Caco-2 (cell line): ENCODE measurements at regions of chr15 and their contacts with region 1.

Region 1: GRCh38 chr15:77543159-77543882 is 89.4 kb downstream of the LINGO1 start:
- DNase-seq: peak; percentile 82 to 89
- H3K4me3 ChIP-seq: peak overlapping the region; percentile 48
- H3K4me3 Mint-ChIP-seq: peak overlapping the region; percentile 67
- H3K27ac Mint-ChIP-seq: peak overlapping the region; percentile 50
- H3K4me1 ChIP-seq: peaks cover 13% of the 10 kb centered on the region; the same call in 1 of the 2 replicates
- H3K4me1 Mint-ChIP-seq: peaks cover 14% of the 10 kb centered on the region
- H3K27me3 ChIP-seq: no peaks in the 10 kb centered on the region
- H3K27me3 Mint-ChIP-seq: no peaks in the 10 kb centered on the region
- CTCF ChIP-seq: peak; percentile 92 to 93

Region 2: GRCh38 chr15:77118882-77119321 is 424.4 kb before region 1 on chr15:
- CTCF ChIA-PET with region 1: interaction called, 27 read pairs
- POLR2A ChIA-PET with region 1: no interaction called
- intact Hi-C with region 1: loop called (anchors 2 kb)
- DNase-seq: peak in 1 of 2 experiments; percentile 51
- H3K4me3 ChIP-seq: no peak overlapping the region
- H3K4me3 Mint-ChIP-seq: no peak overlapping the region
- H3K27ac Mint-ChIP-seq: no peak overlapping the region
- H3K4me1 ChIP-seq: no peaks in the 10 kb centered on the region
- H3K4me1 Mint-ChIP-seq: no peaks in the 10 kb centered on the region
- H3K27me3 ChIP-seq: no peaks in the 10 kb centered on the region
- H3K27me3 Mint-ChIP-seq: no peaks in the 10 kb centered on the region
- CTCF ChIP-seq: peak; percentile 53 to 78

Region 3: GRCh38 chr15:77419836-77420609 is 123.3 kb before region 1 on chr15 and contains the start of gene PEAK1:
- CTCF ChIA-PET with region 1: interaction called, 19 read pairs
- POLR2A ChIA-PET with region 1: no interaction called
- intact Hi-C with region 1: no loop called
- DNase-seq: peak; percentile 99
- H3K4me3 ChIP-seq: peak within 1 kb of the TSS; percentile 93
- H3K4me3 Mint-ChIP-seq: peak within 1 kb of the TSS; percentile 94
- H3K27ac Mint-ChIP-seq: peak within 1 kb of the TSS; percentile 97
- H3K4me1 ChIP-seq: peaks cover 17% of the 10 kb centered on the region
- H3K4me1 Mint-ChIP-seq: peaks cover 8% of the 10 kb centered on the region
- H3K27me3 ChIP-seq: no peaks in the 10 kb centered on the region
- H3K27me3 Mint-ChIP-seq: no peaks in the 10 kb centered on the region
- CTCF ChIP-seq: no peak
- total RNA-seq, gene PEAK1: 18.4 and 21.8 TPM in 2 replicates

Region 4: DNA sequence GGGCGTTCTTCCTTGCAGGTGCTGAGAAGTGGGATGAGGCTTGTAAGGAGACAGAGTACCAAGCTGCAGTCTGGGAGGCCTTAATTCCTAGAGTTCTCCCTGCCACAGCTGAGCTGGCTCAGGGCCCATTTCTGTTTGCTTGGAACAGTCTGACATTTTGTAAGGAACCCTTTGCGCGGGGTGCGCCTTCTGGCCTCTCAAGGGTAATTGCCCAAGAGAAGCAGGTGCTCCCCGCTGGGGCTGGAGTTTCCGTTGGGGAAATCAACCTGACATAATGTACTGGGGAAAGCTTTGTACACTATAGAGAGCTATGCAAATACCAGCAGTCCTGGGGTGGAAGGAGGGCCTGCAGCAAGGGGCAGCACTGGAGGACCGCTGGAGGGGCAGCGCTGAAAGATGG is 39.0 kb before region 1 on chr15:
- CTCF ChIA-PET with region 1: interaction called, 14 read pairs
- POLR2A ChIA-PET with region 1: no interaction called
- intact Hi-C with region 1: loop called (anchors 2 kb)
- DNase-seq: no peak
- H3K4me3 ChIP-seq: no peak overlapping the region
- H3K4me3 Mint-ChIP-seq: no peak overlapping the region
- H3K27ac Mint-ChIP-seq: peak overlapping the region; percentile 80
- H3K4me1 ChIP-seq: peaks cover 17% of the 10 kb centered on the region
- H3K4me1 Mint-ChIP-seq: peaks cover 29% of the 10 kb centered on the region
- H3K27me3 ChIP-seq: no peaks in the 10 kb centered on the region
- H3K27me3 Mint-ChIP-seq: no peaks in the 10 kb centered on the region
- CTCF ChIP-seq: no peak

Region 5: DNA sequence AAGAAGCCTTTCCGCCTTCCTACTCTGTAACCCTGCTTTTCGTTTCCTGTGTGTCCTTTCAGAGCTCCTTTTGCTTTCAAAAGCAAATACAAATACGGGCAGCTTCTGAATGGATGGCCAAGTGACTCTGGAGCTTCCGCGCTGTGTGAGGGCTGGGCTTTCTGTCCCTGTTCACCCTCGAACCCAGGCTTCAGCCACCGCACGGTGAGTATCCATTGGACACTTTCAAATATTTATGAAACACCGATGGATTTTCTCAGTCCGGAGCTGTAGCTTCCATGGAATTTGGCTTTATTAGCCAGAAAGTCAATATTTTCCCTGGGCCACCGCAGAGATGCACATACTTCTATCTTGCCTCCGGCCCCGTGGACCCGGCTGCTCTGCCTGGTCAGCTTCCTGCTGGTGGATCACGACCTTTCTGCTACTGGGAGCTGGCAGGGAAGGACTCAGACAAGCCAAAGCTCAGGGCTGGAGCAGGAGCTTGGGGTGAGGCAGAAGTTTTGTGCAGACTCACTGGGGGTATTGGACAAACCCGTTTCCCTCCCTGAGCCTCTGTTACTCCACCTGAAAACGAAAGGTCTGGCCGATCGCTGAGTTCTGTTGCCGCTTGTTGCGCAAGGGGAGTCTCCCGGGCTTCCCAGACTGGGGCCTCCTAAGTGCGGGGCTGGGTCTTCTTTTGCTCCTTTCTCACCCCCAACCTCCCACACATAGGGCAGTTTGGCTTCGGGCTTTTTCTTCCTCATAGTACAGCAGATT is 25.8 kb after region 1 on chr15:
- CTCF ChIA-PET with region 1: interaction called, 24 read pairs
- POLR2A ChIA-PET with region 1: interaction called, 3 read pairs
- intact Hi-C with region 1: no loop called
- DNase-seq: peak; percentile 60
- H3K4me3 ChIP-seq: peak overlapping the region; percentile 21
- H3K4me3 Mint-ChIP-seq: peak overlapping the region; percentile 63
- H3K27ac Mint-ChIP-seq: peak overlapping the region; percentile 41
- H3K4me1 ChIP-seq: peaks cover 26% of the 10 kb centered on the region
- H3K4me1 Mint-ChIP-seq: peaks cover 8% of the 10 kb centered on the region
- H3K27me3 ChIP-seq: no peaks in the 10 kb centered on the region
- H3K27me3 Mint-ChIP-seq: no peaks in the 10 kb centered on the region
- CTCF ChIP-seq: no peak

Region 6: DNA sequence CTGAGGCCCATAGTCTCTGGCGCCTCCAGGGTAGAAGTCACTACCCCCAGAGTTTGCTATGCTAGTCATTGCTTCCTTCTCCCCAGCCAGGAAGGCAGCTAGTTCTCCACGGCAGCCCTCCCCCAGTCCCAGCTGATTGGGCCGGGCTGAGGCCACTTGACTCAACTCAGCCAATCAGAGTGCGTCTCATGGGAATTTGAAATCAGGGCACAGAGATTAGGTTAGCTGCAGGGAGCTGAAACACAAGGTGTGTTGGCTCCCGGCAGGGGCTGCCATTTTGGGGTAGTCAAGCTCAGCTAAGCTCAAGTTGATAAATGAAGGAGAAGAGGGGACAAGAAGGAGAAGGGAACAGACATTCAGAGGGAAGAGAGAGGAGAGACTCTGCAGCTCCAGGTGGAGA is 56.6 kb after region 1 on chr15:
- CTCF ChIA-PET with region 1: no interaction called
- POLR2A ChIA-PET with region 1: no interaction called
- intact Hi-C with region 1: no loop called
- DNase-seq: peak; percentile 33 to 59
- H3K4me3 ChIP-seq: no peak overlapping the region
- H3K4me3 Mint-ChIP-seq: no peak overlapping the region
- H3K27ac Mint-ChIP-seq: peak overlapping the region; percentile 5
- H3K4me1 ChIP-seq: no peaks in the 10 kb centered on the region
- H3K4me1 Mint-ChIP-seq: no peaks in the 10 kb centered on the region
- H3K27me3 ChIP-seq: no peaks in the 10 kb centered on the region
- H3K27me3 Mint-ChIP-seq: no peaks in the 10 kb centered on the region
- CTCF ChIP-seq: no peak

Region 7: DNA sequence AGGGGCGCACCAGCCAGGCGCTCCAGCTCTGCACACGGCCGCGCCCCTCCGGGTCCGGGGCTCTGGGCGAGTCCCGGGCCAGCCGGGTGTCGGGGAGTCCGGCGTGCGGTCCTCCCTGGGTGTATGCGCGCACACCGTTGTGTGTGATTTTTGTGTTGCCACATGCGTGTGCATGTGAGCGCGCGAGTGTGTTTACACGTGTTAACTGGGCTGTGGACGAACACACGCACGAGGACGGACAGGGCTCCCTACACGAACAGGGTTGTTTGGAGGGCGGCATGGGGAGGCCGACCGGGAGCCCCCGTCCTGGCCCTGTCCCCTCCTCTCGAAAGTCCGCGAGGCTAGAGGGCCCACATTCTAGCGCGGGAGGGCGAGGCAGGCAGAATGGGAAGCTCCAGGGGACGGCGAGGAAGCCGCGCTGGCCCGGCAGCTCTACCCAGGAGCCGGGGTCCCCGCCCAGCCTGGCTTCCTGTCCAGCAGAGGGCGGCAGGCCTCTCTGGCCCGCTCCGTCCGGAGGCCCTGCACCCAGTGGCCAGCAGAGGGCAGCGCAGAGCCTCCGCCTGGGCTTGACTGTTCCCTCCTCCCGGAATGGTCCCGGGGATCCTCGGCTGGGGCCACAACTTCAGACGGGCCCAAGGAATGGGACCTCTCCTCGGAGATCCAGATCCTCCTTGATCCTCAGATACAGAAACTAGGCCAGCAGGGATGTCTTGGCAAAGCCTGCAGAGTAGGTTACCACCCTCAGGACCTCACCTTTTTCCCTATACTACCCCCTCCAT is 90.0 kb after region 1 on chr15:
- CTCF ChIA-PET with region 1: interaction called, 8 read pairs
- POLR2A ChIA-PET with region 1: no interaction called
- intact Hi-C with region 1: loop called (anchors 5 kb)
- DNase-seq: peak; percentile 80 to 93
- H3K4me3 ChIP-seq: peak overlapping the region; percentile 36
- H3K4me3 Mint-ChIP-seq: peak overlapping the region; percentile 63
- H3K27ac Mint-ChIP-seq: no peak overlapping the region
- H3K4me1 ChIP-seq: peaks cover 6% of the 10 kb centered on the region; the same call in 1 of the 2 replicates
- H3K4me1 Mint-ChIP-seq: no peaks in the 10 kb centered on the region
- H3K27me3 ChIP-seq: peaks cover 6% of the 10 kb centered on the region
- H3K27me3 Mint-ChIP-seq: peaks cover 12% of the 10 kb centered on the region
- CTCF ChIP-seq: peak; percentile 99 to 100